ENCODE measurements at regions of chr4 and their contacts with region 1.

Region 1: GRCh38 chr4:107853444-107854355 is 29.0 kb downstream of the SGMS2 start:
- DNase-seq: no peak
- ATAC-seq: peak; percentile 34; the same call in 1 of the 2 replicates
- H3K4me3 ChIP-seq: no peak overlapping the region
- H3K27ac ChIP-seq: peak overlapping the region; percentile 48; the same call in 1 of the 2 replicates
- H3K4me1 ChIP-seq: peaks cover 8% of the 10 kb centered on the region; the same call in 1 of the 2 replicates
- H3K27me3 ChIP-seq: no peaks in the 10 kb centered on the region
- CTCF ChIP-seq: no peak

Region 2: DNA sequence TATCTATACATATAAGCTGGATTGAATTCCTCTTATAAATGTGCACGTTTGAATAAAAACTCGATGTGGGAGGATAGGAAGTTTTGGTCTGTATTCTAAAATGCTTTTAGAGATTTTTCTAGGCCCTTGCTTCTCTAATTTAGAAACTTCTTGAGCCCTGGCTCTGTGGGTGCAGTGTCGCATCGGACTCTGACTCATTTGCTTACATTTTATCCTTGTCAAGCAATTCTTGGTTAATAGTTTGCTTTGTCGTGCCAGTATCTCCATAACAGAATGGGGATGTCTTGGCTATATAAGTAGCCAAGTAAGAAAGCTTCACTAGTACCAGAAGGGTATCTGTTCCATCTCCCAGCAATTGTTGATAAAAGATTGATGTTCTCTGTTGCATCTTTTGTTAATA is 18.3 kb before region 1 on chr4:
- CTCF ChIA-PET with region 1: no interaction called
- POLR2A ChIA-PET with region 1: no interaction called
- in situ Hi-C with region 1: no loop called
- intact Hi-C with region 1: loop called (anchors 2 kb)
- DNase-seq: no peak
- ATAC-seq: no peak
- H3K4me3 ChIP-seq: no peak overlapping the region
- H3K27ac ChIP-seq: no peak overlapping the region
- H3K4me1 ChIP-seq: no peaks in the 10 kb centered on the region
- H3K27me3 ChIP-seq: no peaks in the 10 kb centered on the region
- CTCF ChIP-seq: no peak

Region 3: DNA sequence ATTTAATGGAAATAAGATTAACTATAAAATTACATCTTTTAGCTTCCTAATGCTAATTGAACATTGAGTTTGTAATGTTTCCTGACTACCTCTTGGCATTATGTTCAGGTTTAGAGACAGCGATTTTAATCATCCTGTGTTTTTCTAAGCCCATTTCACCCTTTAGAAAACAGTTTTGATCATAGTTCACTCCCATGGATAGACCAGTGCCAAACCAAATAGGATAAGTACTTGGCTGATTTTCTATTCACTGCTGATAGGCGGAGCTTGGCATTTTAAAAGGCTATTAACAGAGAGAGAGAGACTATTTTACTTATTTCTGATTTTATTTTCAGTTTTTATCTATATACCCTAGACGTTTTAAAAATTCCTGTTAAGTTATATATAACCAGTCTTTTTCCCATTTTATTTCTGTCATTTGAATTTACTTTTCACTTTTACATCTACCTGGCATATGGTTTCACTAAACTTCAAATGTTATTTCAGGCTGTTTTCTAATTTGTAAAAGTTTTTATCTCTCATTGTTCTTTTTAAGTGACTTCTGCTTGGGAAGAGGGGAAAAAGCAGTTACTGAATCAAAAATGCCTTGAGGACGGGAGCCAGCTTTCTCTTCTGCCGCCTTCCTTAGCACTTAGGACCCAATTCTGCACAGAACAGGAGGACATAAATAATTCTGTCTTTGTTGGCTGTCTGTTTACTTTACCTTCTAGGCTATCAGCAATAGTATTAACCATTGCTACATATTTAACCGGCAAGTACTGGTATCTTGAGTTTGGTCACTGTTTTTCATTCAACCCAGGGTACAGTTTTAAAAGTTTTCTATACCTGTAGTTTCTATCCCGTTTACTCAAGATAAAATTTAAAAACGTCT is 17.5 kb after region 1 on chr4:
- CTCF ChIA-PET with region 1: no interaction called
- POLR2A ChIA-PET with region 1: no interaction called
- in situ Hi-C with region 1: no loop called
- intact Hi-C with region 1: no loop called
- DNase-seq: no peak
- ATAC-seq: no peak
- H3K4me3 ChIP-seq: no peak overlapping the region
- H3K27ac ChIP-seq: no peak overlapping the region
- H3K4me1 ChIP-seq: no peaks in the 10 kb centered on the region
- H3K27me3 ChIP-seq: no peaks in the 10 kb centered on the region
- CTCF ChIP-seq: no peak

Region 4: DNA sequence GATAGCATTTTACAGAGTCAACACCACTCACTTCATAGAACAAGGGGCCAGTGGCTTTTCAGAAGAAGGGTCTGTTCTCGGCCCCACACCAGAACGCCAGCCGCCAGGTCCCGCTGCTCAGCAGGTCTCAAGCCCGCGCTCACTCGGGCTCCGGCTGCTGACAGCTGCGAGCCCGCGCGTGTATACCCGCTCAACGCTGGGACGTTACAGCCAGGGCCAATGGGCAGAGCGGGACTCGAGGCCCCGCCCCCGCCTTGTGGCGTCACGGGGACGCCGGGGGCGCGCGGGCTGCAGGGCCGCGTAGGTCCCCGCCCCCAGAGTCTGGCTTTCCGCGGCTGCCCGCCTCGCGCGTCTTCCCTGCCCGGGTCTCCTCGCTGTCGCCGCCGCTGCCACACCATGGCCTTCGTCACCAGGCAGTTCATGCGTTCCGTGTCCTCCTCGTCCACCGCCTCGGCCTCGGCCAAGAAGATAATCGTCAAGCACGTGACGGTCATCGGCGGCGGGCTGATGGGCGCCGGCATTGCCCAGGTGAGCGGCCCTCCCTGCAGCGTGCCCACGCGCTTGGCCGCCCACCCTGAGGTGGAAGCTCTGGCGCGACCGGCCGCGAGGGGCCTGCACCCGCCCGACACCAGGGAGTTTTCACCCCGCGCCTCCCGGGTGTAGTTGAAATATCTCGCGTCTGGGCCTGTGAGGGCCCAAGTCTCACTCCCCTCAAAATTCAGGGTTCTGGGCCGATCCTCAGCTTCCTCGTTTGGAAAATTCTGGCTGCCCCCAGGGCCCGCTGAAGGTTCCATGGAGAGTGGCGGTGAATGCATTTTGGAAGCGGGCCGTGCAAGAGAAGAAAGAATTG is 136.1 kb after region 1 on chr4 and contains the start of gene HADH:
- CTCF ChIA-PET with region 1: no interaction called
- POLR2A ChIA-PET with region 1: no interaction called
- in situ Hi-C with region 1: no loop called
- intact Hi-C with region 1: no loop called
- DNase-seq: peak; percentile 18
- ATAC-seq: peak; percentile 100
- H3K4me3 ChIP-seq: peak within 1 kb of the TSS; percentile 74 to 85
- H3K27ac ChIP-seq: peak within 1 kb of the TSS; percentile 78
- H3K4me1 ChIP-seq: peaks cover 2% of the 10 kb centered on the region
- H3K27me3 ChIP-seq: no peaks in the 10 kb centered on the region
- CTCF ChIP-seq: no peak
- total RNA-seq, gene HADH: 20.0 TPM

Region 5: GRCh38 chr4:107999932-108000539 is 146.3 kb after region 1 on chr4:
- CTCF ChIA-PET with region 1: no interaction called
- POLR2A ChIA-PET with region 1: no interaction called
- in situ Hi-C with region 1: no loop called
- intact Hi-C with region 1: no loop called
- DNase-seq: no peak
- ATAC-seq: no peak
- H3K4me3 ChIP-seq: no peak overlapping the region
- H3K27ac ChIP-seq: no peak overlapping the region
- H3K4me1 ChIP-seq: no peaks in the 10 kb centered on the region
- H3K27me3 ChIP-seq: no peaks in the 10 kb centered on the region
- CTCF ChIP-seq: no peak